ENCODE measurements at regions of chr2 and their contacts with region 1.

Region 1: GRCh38 chr2:189412330-189412953 is 28.8 kb upstream of the WDR75 start:
- DNase-seq: peak; percentile 43
- CTCF ChIP-seq: peak; percentile 77

Region 2: DNA sequence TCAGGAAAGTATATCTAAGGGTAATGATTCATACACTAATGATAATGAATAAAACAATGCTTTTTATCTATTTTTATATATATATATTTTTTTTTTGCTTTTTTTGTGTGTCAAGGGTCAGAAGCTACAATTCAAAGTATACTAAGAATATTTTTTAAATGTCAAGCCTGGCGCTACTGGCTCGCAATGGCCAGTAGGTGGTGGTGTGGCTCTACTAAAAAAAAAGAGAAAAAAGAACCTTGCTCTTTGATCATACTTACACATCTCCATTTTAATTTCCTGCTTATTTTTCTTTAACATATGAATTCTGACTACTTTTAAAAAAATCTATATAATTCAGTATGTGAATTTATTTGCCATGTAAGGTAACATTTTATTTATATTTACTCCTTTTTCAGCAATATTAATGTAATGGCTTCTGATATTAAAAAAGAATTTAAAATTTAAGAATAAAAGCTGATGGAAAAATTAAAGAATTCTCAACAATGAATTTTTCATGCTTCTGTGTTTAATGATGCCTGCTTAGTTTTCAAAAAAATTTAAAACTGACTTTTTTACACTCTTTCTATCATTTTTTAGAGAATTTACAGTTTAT is 887.8 kb before region 1 on chr2:
- in situ Hi-C with region 1: loop called (anchors 25 kb)
- DNase-seq: peak; percentile 11
- CTCF ChIP-seq: peak; percentile 80

Region 3: DNA sequence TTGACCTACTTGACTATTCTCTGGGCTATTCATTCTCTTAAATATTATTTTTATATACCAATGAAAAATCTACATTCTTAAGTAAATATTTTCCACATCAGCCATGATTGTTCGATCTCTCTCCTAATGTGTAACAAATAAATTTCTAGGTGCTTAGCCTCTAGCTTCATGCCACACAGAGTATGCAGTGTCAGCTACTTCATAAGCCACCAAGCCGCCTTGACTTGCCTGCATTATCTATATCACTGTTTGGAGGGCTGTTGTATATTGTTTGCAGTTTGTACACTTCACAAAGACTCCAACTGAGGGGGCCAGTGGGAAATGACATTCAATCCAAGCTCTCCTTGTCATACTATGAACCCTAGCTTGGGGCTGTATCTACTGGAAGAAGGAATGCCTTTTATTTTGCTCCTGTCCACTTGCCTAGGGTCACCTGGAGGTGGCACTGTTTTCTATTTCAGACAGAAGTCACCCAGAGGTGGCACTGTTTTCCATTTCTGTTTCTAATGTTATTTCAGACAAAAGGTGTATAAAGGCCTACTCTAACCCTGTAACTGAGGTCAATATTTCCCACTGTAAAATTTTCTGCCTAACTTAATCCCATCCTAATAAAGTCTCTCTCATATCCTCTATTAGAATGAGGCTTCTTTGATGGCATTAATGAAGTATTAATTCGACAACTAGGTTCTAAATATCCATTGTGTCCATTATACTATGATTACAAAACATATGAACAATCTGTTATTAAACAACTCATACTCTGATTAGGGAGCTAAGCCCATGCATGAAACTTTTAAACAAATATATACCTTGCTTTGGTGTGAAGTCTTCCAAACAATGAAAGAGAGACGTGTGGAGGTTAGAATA is 269.3 kb before region 1 on chr2:
- in situ Hi-C with region 1: loop called (anchors 25 kb)
- DNase-seq: peak; percentile 38
- CTCF ChIP-seq: peak; percentile 91